PC-9 (cell line): ENCODE measurements at regions of chr5 and their contacts with region 1.

Region 1: DNA sequence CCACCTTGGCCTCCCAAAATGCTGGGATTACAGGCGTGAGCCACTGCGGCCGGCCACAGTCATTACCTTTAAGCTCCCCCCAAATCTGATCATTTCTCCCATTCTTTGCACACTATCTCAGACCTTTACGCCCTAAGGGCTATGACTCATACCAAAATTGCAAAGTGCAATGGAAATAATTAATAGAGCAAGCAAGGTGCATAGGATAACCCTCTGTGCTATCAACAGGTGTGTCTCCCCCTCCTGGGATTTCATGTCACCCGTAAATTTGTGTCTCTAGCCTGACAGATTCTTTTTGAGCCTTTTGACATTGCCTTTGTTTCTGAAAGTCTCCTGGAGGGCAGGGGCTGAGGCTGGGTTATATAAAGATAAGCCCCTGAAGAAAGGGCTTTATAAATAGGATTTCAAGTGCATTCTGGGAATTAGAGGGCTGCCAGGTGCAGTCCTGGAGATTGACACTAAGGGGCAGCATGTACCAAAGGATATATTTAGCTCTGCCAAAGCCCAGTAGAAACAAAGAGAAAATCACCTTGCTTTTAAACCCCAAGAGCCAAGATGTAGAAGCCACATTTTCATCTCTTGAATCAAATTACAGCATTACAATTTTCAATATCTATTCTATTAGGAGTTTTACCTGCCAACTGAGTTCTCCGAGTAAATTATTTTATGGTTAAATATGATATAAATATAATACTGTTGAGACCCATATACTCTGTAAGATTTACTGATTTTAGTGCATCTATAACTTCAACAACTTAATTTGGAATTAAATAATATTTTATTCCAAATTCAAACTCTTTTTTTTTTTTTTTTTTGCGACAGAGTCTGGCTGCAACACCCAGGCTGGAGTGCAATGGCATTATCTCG is 18.2 kb downstream of the S100Z start:
- DNase-seq: peak; percentile 79 to 94
- H3K4me3 ChIP-seq: no peak overlapping the region
- H3K27ac ChIP-seq: peak overlapping the region; percentile 62
- H3K4me1 ChIP-seq: peaks cover 17% of the 10 kb centered on the region
- H3K27me3 ChIP-seq: no peaks in the 10 kb centered on the region
- CTCF ChIP-seq: peak; percentile 94

Region 2: GRCh38 chr5:76601470-76601869 is 266.6 kb before region 1 on chr5:
- CTCF ChIA-PET with region 1: no interaction called
- POLR2A ChIA-PET with region 1: no interaction called
- intact Hi-C with region 1: loop called (anchors 1 kb)
- DNase-seq: peak in 1 of 2 experiments; percentile 23
- H3K4me3 ChIP-seq: no peak overlapping the region
- H3K27ac ChIP-seq: no peak overlapping the region
- H3K4me1 ChIP-seq: peaks cover 7% of the 10 kb centered on the region
- H3K27me3 ChIP-seq: no peaks in the 10 kb centered on the region
- CTCF ChIP-seq: peak; percentile 85

Region 3: DNA sequence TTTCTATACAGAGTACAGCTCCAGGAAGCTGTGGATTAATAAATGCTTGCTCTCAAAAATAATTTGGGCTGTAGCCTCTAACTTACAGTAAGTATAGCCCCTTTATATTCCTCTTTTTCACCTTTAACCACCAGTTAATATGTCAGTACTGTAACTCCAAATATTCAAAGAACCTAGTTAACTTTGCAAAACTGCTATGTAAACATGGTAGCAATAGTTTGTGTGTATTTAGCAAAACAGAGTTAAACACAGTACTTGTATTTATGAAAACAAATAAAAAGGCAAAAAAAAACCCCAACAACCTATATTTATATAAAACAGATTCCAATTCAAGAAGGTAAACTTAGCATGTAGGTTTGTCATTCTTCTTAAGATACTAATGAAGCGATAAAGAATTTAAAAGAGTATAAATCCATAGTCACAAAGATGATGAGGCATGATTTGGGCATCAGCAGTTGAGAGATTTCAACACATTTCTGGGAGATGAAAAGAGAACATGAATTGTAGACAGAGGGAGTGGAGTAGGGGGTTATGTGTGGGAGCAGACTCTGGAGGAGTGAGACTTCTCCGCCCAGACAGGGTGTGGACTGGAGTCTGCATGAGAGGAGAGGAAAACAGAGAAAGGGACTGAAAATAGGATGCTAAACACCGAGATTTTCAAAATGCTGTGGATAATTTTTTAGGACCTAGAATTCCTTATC is 96.2 kb before region 1 on chr5:
- CTCF ChIA-PET with region 1: interaction called, 12 read pairs
- POLR2A ChIA-PET with region 1: no interaction called
- intact Hi-C with region 1: loop called (anchors 5 kb)
- DNase-seq: no peak
- H3K4me3 ChIP-seq: no peak overlapping the region
- H3K27ac ChIP-seq: no peak overlapping the region
- H3K4me1 ChIP-seq: 0 out of 2 replicates have a peak, but pooled peaks cover 6% of the 10 kb centered on the region
- H3K27me3 ChIP-seq: no peaks in the 10 kb centered on the region
- CTCF ChIP-seq: no peak

Region 4: GRCh38 chr5:76790632-76791290 is 77.3 kb before region 1 on chr5:
- CTCF ChIA-PET with region 1: no interaction called
- POLR2A ChIA-PET with region 1: no interaction called
- intact Hi-C with region 1: no loop called
- DNase-seq: peak; percentile 33 to 98
- H3K4me3 ChIP-seq: 0 out of 2 replicates have a peak overlapping the region, but pooled peaks have one; percentile 14
- H3K27ac ChIP-seq: peak overlapping the region; percentile 94
- H3K4me1 ChIP-seq: peaks cover 71% of the 10 kb centered on the region
- H3K27me3 ChIP-seq: no peaks in the 10 kb centered on the region
- CTCF ChIP-seq: no peak

Region 5: DNA sequence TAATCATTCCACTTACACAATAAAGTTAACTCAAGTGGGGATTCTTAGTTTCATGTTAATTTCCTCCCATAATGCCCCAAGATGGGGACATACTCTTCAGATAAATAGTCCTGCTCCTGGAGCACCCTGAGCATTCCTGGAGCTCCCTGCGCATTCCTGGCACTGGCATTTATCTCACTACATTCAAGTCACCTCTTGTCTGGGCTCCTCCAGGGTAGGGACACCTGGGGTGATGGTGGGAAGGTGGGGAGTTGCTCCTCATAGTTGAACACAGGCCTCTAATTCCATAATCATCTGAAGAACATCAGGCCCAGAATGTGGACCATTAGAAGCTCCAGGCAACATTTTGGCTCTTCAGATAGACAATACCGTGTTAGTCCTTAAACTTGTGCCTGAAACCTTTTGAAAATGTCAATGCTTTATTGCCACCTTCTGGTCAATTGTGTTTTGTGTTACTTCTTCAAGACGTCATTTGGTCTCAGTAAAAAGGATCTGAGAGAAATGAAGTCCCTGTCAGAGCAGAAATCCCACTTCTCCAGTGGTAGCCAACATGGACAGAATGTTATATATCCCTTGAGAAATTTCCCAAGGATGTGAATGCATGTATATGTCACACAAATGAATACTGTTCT is 148.0 kb after region 1 on chr5:
- CTCF ChIA-PET with region 1: interaction called, 4 read pairs
- POLR2A ChIA-PET with region 1: no interaction called
- intact Hi-C with region 1: loop called (anchors 1 kb)
- DNase-seq: peak in 1 of 2 experiments; percentile 35
- H3K4me3 ChIP-seq: no peak overlapping the region
- H3K27ac ChIP-seq: no peak overlapping the region
- H3K4me1 ChIP-seq: no peaks in the 10 kb centered on the region
- H3K27me3 ChIP-seq: no peaks in the 10 kb centered on the region
- CTCF ChIP-seq: peak; percentile 61

Region 6: DNA sequence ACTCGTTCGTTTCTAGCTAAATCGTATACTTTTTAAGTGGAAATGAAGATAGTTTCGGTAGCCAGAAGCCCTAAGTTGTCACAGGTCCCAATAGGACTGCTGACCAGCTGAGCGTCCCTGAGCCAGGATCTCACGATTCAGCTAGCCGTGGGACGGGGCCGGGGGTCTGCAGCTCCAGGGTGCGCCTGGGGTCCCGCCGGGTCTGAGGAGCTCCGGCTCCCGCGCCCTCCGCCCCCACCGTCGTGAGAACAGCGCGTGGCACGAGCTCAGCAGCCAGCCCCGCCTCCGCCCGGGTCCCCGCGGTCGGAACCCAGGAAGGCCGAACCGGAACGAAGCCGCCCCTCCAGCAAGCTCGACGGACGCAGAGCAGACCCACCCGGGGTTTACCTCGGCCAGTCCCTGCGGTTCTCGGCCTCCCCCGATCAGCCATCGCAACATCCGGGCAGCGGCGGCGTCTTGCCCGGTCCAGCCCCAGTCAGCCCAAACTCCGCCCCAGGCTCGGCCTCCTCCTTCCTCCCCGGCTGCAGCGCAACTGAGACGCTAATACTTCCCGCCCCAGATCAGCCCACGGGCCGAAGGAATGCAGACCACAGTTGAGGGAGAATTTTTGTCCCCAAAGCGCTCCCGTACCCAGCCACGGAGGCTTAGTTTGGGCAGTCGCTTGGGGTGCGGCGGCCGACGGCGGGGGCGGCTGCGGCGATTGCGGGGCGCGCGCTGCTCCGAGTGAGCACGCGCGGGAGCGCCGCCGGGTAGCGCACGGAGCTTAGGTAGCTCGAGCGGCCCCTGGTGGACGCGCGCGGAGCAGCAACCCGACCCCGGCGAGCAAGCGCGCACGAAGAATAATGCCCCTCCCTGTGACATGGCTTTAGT is 624.0 kb after region 1 on chr5 and contains the start of gene WDR41:
- CTCF ChIA-PET with region 1: no interaction called
- POLR2A ChIA-PET with region 1: no interaction called
- intact Hi-C with region 1: loop called (anchors 2 kb)
- DNase-seq: peak; percentile 75 to 84
- H3K4me3 ChIP-seq: peak within 1 kb of the TSS; percentile 82
- H3K27ac ChIP-seq: peak within 1 kb of the TSS; percentile 39
- H3K4me1 ChIP-seq: peaks cover 5% of the 10 kb centered on the region; the same call in 1 of the 2 replicates
- H3K27me3 ChIP-seq: no peaks in the 10 kb centered on the region
- CTCF ChIP-seq: peak; percentile 83
- total RNA-seq, gene WDR41: 25.2 and 35.8 TPM in 2 replicates